Heart left ventricle (tissue), 16 donors: ENCODE measurements at regions of chr20 and their contacts with region 1.

Region 1: GRCh38 chr20:57654363-57654997 is 34.3 kb upstream of the ZBP1 start:
- DNase-seq: peak in 4 of 5 donors; percentile 30 to 53 (median 39)
- ATAC-seq: peak; percentile 45 to 64 (median 54)
- H3K4me3 ChIP-seq: no peak overlapping the region
- H3K27ac ChIP-seq: no peak overlapping the region
- H3K4me1 ChIP-seq: peaks cover 0 to 18% (median 5%) of the 10 kb centered on the region in 12 donors
- H3K27me3 ChIP-seq: no peaks in the 10 kb centered on the region
- CTCF ChIP-seq: peak; percentile 85 to 94 (median 90)
- POLR2A ChIP-seq: no peak

Region 2: DNA sequence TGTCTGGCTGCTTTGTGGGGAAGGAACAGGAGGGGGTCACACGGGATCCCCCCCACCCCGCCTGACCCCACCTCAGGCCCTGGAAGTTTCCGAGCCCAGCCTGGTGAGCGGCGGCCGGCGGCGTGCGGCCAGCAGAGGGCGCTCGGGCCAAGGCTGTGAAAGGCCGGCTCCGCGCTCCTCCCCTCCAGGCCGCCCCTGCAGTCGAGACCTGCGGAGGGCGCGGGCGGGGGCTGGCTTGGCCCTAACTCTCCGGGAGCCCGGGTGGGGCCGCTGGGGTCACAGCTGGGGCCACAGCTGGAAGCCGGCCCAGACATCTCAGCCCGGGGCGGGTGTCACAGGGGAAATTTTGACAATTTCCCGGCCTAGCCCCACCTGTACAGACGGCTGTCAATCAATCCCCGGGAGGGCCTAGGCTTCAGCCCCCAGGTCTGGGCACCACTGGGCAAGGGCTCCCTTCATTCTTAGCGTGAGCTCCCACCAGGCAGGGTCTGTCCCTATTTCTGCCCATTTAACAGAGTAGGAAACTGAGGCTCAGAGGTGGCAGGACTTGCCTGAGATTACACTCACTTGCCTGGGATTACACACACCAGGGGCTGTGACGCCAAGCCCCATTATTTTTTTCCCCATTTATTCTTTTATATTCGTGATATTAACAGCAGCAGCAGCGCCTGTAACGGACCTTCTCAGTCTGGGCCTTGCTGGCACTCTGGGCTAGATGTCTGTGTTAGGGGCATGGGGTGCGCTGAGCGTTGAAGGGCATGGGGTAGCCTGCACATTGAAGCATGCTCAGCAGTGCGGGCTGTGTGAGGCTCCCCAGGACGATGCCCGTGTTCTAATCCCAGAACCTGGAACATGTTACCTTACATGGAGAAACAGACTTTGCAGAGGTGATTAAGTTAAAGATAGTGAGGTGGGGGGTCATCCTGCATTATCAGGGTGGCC is 57.2 kb before region 1 on chr20:
- intact Hi-C with region 1: loop called in 3 of 10 experiments (anchors 5 to 10 kb)
- DNase-seq: peak; percentile 62 to 86 (median 74)
- ATAC-seq: peak; percentile 67 to 87 (median 80)
- H3K4me3 ChIP-seq: peak overlapping the region in 3 of 12 donors; percentile 20 to 27 (median 23)
- H3K27ac ChIP-seq: no peak overlapping the region
- H3K4me1 ChIP-seq: peaks cover 0 to 8% (median 5%) of the 10 kb centered on the region in 12 donors
- H3K27me3 ChIP-seq: peaks cover 0 to 5% (median 0%) of the 10 kb centered on the region in 9 donors
- CTCF ChIP-seq: peak; percentile 90 to 96 (median 94)
- POLR2A ChIP-seq: no peak

Region 3: GRCh38 chr20:57748601-57749130 is 94.2 kb after region 1 on chr20:
- intact Hi-C with region 1: loop called in 2 of 10 experiments (anchors 5 kb)
- DNase-seq: peak; percentile 86 to 93 (median 88)
- ATAC-seq: peak; percentile 82 to 92 (median 88)
- H3K4me3 ChIP-seq: peak overlapping the region in 10 of 12 donors; percentile 6 to 49 (median 42)
- H3K27ac ChIP-seq: peak overlapping the region; percentile 1 to 92 (median 84)
- H3K4me1 ChIP-seq: peaks cover 9 to 34% (median 29%) of the 10 kb centered on the region in 12 donors
- H3K27me3 ChIP-seq: no peaks in the 10 kb centered on the region
- CTCF ChIP-seq: peak in 1 of 12 donors; percentile 30
- POLR2A ChIP-seq: no peak

Region 4: DNA sequence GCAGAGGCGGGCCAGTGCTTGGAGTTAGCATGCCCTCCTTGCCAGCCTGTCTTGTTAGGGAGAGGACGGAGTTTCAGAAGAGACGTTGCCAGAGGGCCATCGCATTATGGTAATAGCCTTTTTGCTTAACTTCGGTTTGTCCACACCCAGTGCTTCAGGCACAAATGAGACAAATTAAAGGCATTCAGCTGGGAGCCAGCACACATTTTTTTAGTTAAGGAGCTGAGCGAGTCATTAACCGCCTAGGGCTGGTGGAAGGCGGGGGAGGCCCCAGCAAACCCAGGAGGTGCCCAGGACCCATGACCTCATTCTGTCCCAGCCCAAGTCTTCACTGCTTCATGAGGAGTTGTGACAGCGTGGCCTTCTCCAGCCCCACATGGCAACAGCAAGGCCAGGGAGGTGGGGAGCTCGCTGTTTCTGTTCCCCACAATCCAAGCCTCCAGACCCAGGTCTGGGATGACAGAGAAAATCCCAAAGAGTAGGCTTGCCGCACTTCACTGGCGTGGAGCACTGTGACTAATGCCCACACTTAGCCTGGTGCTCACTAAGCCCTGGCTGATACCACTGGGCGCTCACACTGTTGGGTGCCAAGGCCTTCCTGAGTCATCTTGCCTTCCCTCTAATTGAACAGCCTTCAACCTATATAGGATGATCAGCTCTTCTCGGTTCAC is 336.9 kb after region 1 on chr20:
- intact Hi-C with region 1: loop called in 1 of 10 experiments (anchors 10 kb)
- DNase-seq: peak in 1 of 5 donors; percentile 46
- ATAC-seq: peak in 2 of 4 donors; percentile 52 to 61
- H3K4me3 ChIP-seq: no peak overlapping the region
- H3K27ac ChIP-seq: peak overlapping the region in 1 of 12 donors; percentile 26
- H3K4me1 ChIP-seq: peaks cover 0 to 26% (median 6%) of the 10 kb centered on the region in 12 donors
- H3K27me3 ChIP-seq: no peaks in the 10 kb centered on the region
- CTCF ChIP-seq: no peak
- POLR2A ChIP-seq: no peak

Region 5: GRCh38 chr20:58087193-58087858 is 432.8 kb after region 1 on chr20:
- intact Hi-C with region 1: loop called (anchors 1 to 5 kb)
- DNase-seq: peak in 2 of 5 donors; percentile 38 to 47
- ATAC-seq: peak in 2 of 4 donors; percentile 26 to 72
- H3K4me3 ChIP-seq: no peak overlapping the region
- H3K27ac ChIP-seq: no peak overlapping the region
- H3K4me1 ChIP-seq: no peaks in the 10 kb centered on the region
- H3K27me3 ChIP-seq: peaks cover 0 to 7% (median 0%) of the 10 kb centered on the region in 9 donors
- CTCF ChIP-seq: peak; percentile 81 to 96 (median 88)
- POLR2A ChIP-seq: no peak